ENCODE measurements at regions of chr9 and their contacts with region 1.

Region 1: GRCh38 chr9:133375724-133376654 is at the starts of genes STKLD1 and SURF4:
- DNase-seq: peak; percentile 84 to 97 (median 94)
- ATAC-seq: peak; percentile 74
- H3K4me3 ChIP-seq: peak within 1 kb of the TSS; percentile 73
- H3K4me3 Mint-ChIP-seq: peak within 1 kb of the TSS; percentile 96
- H3K27ac ChIP-seq: peak within 1 kb of the TSS; percentile 81 to 84
- H3K27ac Mint-ChIP-seq: peak within 1 kb of the TSS; percentile 98
- H3K4me1 ChIP-seq: peaks cover 53% of the 10 kb centered on the region
- H3K4me1 Mint-ChIP-seq: peaks cover 40% of the 10 kb centered on the region
- H3K27me3 ChIP-seq: no peaks in the 10 kb centered on the region
- H3K27me3 Mint-ChIP-seq: no peaks in the 10 kb centered on the region
- CTCF ChIP-seq: no peak
- total RNA-seq, gene STKLD1: 0.59 to 1.0 TPM
- total RNA-seq, gene SURF4: 90.7 to 94.6 TPM

Region 2: DNA sequence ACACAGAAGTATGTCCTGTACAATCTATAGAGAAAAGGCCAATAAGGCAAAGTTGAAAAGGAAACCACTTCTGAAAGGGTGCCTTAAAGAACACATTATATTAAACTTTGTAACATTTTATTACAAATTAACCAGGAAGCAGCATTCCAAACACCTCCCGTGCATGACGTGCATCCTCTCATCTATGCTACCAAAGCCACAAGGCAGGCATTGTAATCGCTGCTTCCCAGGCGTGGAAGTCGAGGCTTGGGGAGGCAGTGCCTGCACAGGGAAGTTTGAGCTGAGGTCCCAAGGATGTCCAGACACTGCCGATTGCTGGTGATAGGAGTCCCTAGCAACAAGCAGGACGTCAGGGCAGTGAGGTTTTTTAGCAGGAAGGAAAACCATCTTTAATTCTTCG is 837.9 kb before region 1 on chr9:
- CTCF ChIA-PET with region 1: no interaction called
- POLR2A ChIA-PET with region 1: no interaction called
- intact Hi-C with region 1: no loop called
- DNase-seq: no peak
- ATAC-seq: no peak
- H3K4me3 ChIP-seq: no peak overlapping the region
- H3K4me3 Mint-ChIP-seq: no peak overlapping the region
- H3K27ac ChIP-seq: no peak overlapping the region
- H3K27ac Mint-ChIP-seq: no peak overlapping the region
- H3K4me1 ChIP-seq: no peaks in the 10 kb centered on the region
- H3K4me1 Mint-ChIP-seq: no peaks in the 10 kb centered on the region
- H3K27me3 ChIP-seq: no peaks in the 10 kb centered on the region
- H3K27me3 Mint-ChIP-seq: peaks cover 11% of the 10 kb centered on the region
- CTCF ChIP-seq: no peak

Region 3: GRCh38 chr9:133184962-133185361 is 191.0 kb before region 1 on chr9:
- CTCF ChIA-PET with region 1: interaction called, 9 read pairs
- POLR2A ChIA-PET with region 1: interaction called, 3 read pairs
- intact Hi-C with region 1: loop called in 1 of 2 experiments (anchors 2 kb)
- DNase-seq: peak in 7 of 14 experiments; percentile 16 to 70 (median 42)
- ATAC-seq: peak; percentile 58
- H3K4me3 ChIP-seq: no peak overlapping the region
- H3K4me3 Mint-ChIP-seq: peak overlapping the region; percentile 12
- H3K27ac ChIP-seq: no peak overlapping the region
- H3K27ac Mint-ChIP-seq: no peak overlapping the region
- H3K4me1 ChIP-seq: peaks cover 12% of the 10 kb centered on the region
- H3K4me1 Mint-ChIP-seq: peaks cover 19% of the 10 kb centered on the region
- H3K27me3 ChIP-seq: peaks cover 8 to 14% of the 10 kb centered on the region in 2 experiments
- H3K27me3 Mint-ChIP-seq: peaks cover 31% of the 10 kb centered on the region
- CTCF ChIP-seq: peak; percentile 55

Region 4: DNA sequence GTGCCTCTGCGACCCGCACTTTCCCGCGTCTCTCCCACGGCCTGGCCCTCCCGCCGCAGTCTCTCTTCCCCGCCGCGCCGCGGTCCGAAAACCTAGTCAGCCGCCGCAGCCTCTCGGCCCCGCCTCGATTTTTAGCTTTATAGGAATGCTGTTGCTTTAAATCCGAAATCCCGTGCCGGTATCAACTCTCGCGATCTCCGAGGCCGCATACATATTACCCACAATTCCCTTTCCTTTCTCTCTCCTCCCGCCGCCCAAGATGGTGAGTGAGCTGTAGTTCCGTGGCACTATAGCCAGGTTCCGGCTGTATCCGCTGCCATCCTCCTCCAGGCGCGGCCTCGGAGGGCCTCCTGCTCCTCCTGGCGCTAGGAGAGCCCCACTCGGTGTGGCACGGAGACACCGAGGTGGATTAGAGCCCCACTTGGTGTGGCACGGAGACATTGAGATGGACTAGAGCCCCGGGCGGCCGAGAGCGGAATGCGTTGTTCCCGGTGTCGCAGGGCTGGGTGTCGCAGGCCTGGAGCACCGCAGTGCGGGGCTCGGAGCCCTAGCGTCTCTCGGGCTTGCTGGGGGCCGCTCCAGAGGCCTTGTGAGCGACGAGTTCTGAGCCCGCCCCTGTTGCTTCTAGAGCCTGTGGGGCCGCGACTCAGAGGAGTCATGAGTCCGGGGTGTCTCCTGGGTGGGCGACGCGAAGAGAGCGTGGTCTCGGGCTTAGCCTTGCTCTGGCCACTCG is 27.8 kb before region 1 on chr9 and contains the starts of genes MED22 and RPL7A:
- CTCF ChIA-PET with region 1: interaction called, 11 read pairs
- POLR2A ChIA-PET with region 1: interaction called, 31 read pairs
- intact Hi-C with region 1: loop called in 1 of 2 experiments (anchors 1 kb)
- DNase-seq: peak; percentile 83 to 97 (median 88)
- ATAC-seq: peak; percentile 90
- H3K4me3 ChIP-seq: peak within 1 kb of the TSS; percentile 88
- H3K4me3 Mint-ChIP-seq: peak within 1 kb of the TSS; percentile 96
- H3K27ac ChIP-seq: peak within 1 kb of the TSS; percentile 84 to 91
- H3K27ac Mint-ChIP-seq: peak within 1 kb of the TSS; percentile 85
- H3K4me1 ChIP-seq: peaks cover 50% of the 10 kb centered on the region
- H3K4me1 Mint-ChIP-seq: peaks cover 39% of the 10 kb centered on the region
- H3K27me3 ChIP-seq: no peaks in the 10 kb centered on the region
- H3K27me3 Mint-ChIP-seq: no peaks in the 10 kb centered on the region
- CTCF ChIP-seq: no peak
- total RNA-seq, gene MED22: 15.7 to 18.0 TPM
- total RNA-seq, gene RPL7A: 2,613 to 2,686 TPM

Region 5: GRCh38 chr9:133356391-133357091 is 19.4 kb before region 1 on chr9 and contains the starts of genes SURF1 and SURF2:
- CTCF ChIA-PET with region 1: interaction called, 19 read pairs
- POLR2A ChIA-PET with region 1: interaction called, 109 read pairs
- intact Hi-C with region 1: loop called (anchors 1 to 2 kb)
- DNase-seq: peak; percentile 81 to 94 (median 90)
- ATAC-seq: peak; percentile 95
- H3K4me3 ChIP-seq: peak within 1 kb of the TSS; percentile 74
- H3K4me3 Mint-ChIP-seq: peak within 1 kb of the TSS; percentile 92
- H3K27ac ChIP-seq: peak within 1 kb of the TSS; percentile 56 to 79
- H3K27ac Mint-ChIP-seq: peak within 1 kb of the TSS; percentile 88
- H3K4me1 ChIP-seq: peaks cover 50% of the 10 kb centered on the region
- H3K4me1 Mint-ChIP-seq: peaks cover 27% of the 10 kb centered on the region
- H3K27me3 ChIP-seq: no peaks in the 10 kb centered on the region
- H3K27me3 Mint-ChIP-seq: no peaks in the 10 kb centered on the region
- CTCF ChIP-seq: no peak
- total RNA-seq, gene SURF1: 42.5 to 45.9 TPM
- total RNA-seq, gene SURF2: 12.7 TPM

Region 6: GRCh38 chr9:133417541-133418461 is 41.8 kb after region 1 on chr9 and contains the start of gene REXO4:
- CTCF ChIA-PET with region 1: no interaction called
- POLR2A ChIA-PET with region 1: interaction called, 10 read pairs
- intact Hi-C with region 1: loop called in 1 of 2 experiments (anchors 5 kb)
- DNase-seq: peak; percentile 71 to 91 (median 78)
- ATAC-seq: peak; percentile 86
- H3K4me3 ChIP-seq: peak within 1 kb of the TSS; percentile 79
- H3K4me3 Mint-ChIP-seq: peak within 1 kb of the TSS; percentile 92
- H3K27ac ChIP-seq: peak within 1 kb of the TSS; percentile 68 to 82
- H3K27ac Mint-ChIP-seq: peak within 1 kb of the TSS; percentile 86
- H3K4me1 ChIP-seq: peaks cover 34% of the 10 kb centered on the region
- H3K4me1 Mint-ChIP-seq: peaks cover 42% of the 10 kb centered on the region
- H3K27me3 ChIP-seq: no peaks in the 10 kb centered on the region
- H3K27me3 Mint-ChIP-seq: no peaks in the 10 kb centered on the region
- CTCF ChIP-seq: no peak
- total RNA-seq, gene REXO4: 17.3 to 18.5 TPM

Region 7: DNA sequence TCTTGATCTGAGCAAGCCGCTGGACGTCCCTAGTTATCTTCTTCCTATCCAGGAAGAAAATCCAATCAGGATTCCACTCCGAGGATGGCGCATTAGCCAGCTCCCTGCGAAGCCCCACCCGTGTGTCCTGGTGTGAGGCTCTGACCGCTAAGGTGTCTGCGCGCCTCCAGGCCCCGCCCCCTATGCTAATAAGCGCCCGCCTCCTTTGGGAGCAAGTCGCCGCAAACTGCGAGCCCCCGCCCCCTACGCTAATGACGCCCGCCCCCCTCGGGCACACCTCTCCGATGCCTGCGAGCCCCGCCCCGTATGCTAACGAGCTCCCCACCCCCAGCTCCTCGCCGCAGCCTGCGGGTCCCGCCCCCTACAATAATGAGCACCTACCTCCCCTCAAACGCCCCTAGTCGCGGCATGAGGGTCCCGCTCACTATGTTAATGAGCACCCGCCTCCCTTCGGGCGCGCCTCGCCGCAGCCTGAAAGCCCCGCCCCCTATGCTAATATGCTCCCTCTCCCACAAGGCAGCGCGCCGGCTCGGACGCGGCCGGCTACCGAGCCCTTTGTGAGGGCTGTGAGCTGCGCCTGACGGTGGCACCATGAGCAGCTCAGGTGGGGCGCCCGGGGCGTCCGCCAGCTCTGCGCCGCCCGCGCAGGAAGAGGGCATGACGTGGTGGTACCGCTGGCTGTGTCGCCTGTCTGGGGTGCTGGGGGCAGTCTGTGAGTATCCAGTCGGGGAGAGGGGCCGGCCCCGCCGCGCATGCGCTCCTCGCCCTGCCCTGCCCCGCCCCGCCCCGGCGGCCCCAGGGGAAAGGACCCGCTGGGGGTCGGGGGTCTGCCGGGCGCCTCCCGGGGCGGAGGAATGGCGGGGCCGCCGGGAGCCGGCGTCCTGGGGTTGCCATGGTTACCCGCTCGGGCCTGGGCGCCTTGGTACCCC is 83.8 kb after region 1 on chr9 and contains the start of gene CACFD1:
- CTCF ChIA-PET with region 1: no interaction called
- POLR2A ChIA-PET with region 1: interaction called, 3 read pairs
- intact Hi-C with region 1: loop called in 1 of 2 experiments (anchors 5 kb)
- DNase-seq: peak; percentile 83 to 97 (median 90)
- ATAC-seq: peak; percentile 80
- H3K4me3 ChIP-seq: peak within 1 kb of the TSS; percentile 69
- H3K4me3 Mint-ChIP-seq: peak within 1 kb of the TSS; percentile 95
- H3K27ac ChIP-seq: peak within 1 kb of the TSS; percentile 52 to 82
- H3K27ac Mint-ChIP-seq: peak within 1 kb of the TSS; percentile 97
- H3K4me1 ChIP-seq: peaks cover 18% of the 10 kb centered on the region
- H3K4me1 Mint-ChIP-seq: peaks cover 23% of the 10 kb centered on the region
- H3K27me3 ChIP-seq: no peaks in the 10 kb centered on the region
- H3K27me3 Mint-ChIP-seq: no peaks in the 10 kb centered on the region
- CTCF ChIP-seq: no peak
- total RNA-seq, gene CACFD1: 3.7 to 3.8 TPM

Measured in CD4-positive, alpha-beta T cell (primary cell).